ENCODE measurements at regions of chr6 and their contacts with region 1.

Region 1: DNA sequence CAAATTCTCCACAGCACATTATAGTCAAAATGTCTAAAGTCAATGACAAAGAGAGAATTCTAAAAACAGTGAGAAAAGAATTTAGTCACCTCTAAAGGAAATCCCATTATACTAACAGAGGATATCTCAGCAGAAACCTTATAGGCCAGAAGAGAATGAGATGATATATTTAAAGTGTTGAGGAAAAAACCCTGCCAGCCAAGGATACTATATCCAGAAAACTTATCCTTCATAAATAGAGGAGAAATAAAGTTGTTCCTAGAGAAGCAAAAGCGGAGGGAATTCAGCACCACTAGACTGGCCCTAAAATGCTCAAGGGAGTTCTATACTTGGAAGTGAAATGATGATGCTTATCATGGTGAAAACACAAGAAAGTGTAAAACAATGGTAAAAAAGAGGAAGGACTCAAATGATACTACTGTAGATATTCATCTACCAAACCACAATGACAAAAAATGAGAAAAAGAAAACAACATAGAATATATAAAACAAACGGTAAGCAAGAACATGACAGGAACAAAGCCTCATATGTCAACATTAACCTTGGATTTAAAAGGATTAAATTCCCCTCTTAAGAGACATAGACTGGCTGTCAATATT is 16.7 kb downstream of the GPRC6A start:
- DNase-seq: no peak
- ATAC-seq: no peak
- H3K4me3 ChIP-seq: no peak overlapping the region
- H3K27ac ChIP-seq: no peak overlapping the region
- H3K4me1 ChIP-seq: no peaks in the 10 kb centered on the region
- H3K27me3 ChIP-seq: no peaks in the 10 kb centered on the region
- CTCF ChIP-seq: no peak

Region 2: GRCh38 chr6:118054082-118054481 is 1241.9 kb after region 1 on chr6:
- intact Hi-C with region 1: loop called in 1 of 10 experiments (anchors 5 kb)
- DNase-seq: no peak
- ATAC-seq: no peak
- H3K4me3 ChIP-seq: no peak overlapping the region
- H3K27ac ChIP-seq: no peak overlapping the region
- H3K4me1 ChIP-seq: no peaks in the 10 kb centered on the region
- H3K27me3 ChIP-seq: no peaks in the 10 kb centered on the region
- CTCF ChIP-seq: no peak

Measured in heart right ventricle (tissue), 16 donors.